ENCODE measurements at regions of chr7 and their contacts with region 1.

Region 1: GRCh38 chr7:10401793-10402192 is 571.9 kb upstream of the PHF14 start:
- DNase-seq: no peak
- H3K4me3 ChIP-seq: no peak overlapping the region
- H3K27ac ChIP-seq: no peak overlapping the region
- H3K4me1 ChIP-seq: no peaks in the 10 kb centered on the region
- H3K27me3 ChIP-seq: no peaks in the 10 kb centered on the region
- CTCF ChIP-seq: no peak
- EP300 ChIP-seq: no peak
- POLR2A ChIP-seq: no peak

Region 2: DNA sequence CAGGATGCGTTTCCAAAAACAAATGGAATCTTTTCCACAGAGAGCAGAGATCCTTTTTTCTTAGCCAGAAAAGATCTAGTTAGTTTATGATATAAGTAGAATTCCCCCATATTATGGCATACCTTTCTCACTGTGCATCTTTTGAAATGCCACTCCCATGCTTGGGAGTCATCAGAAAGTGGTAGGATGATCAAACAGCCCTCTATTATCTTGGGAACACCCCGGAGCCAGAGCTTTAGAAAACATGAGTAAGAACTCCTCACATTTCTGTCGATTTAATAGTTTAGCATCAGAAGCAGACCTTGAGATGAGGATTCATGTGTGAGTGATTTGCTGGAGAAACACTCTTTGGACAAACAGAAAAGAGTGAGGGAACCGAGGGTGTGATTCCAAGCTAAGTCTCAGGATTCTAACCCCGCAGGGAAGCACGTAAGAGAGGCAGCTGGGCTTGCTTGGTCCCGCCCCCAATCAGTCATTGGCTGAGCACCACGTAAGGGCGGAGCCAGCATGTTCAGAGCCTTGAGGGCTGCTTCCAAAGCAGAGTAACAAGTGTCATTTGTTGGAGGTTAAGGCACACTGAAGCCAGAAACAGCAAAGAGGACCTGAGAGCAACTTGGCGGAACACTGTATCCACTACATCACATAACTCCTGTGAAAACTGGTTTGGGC is 2012.1 kb before region 1 on chr7:
- in situ Hi-C with region 1: loop called in 1 of 4 experiments (anchors 25 kb)
- intact Hi-C with region 1: no loop called
- DNase-seq: no peak
- H3K4me3 ChIP-seq: no peak overlapping the region
- H3K27ac ChIP-seq: no peak overlapping the region
- H3K4me1 ChIP-seq: no peaks in the 10 kb centered on the region
- H3K27me3 ChIP-seq: peaks cover 4% of the 10 kb centered on the region
- CTCF ChIP-seq: no peak
- EP300 ChIP-seq: no peak
- POLR2A ChIP-seq: no peak

Measured in transverse colon (tissue), 4 donors.